Breast epithelium (tissue), 4 donors: ENCODE measurements at regions of chr17 and their contacts with region 1.

Region 1: DNA sequence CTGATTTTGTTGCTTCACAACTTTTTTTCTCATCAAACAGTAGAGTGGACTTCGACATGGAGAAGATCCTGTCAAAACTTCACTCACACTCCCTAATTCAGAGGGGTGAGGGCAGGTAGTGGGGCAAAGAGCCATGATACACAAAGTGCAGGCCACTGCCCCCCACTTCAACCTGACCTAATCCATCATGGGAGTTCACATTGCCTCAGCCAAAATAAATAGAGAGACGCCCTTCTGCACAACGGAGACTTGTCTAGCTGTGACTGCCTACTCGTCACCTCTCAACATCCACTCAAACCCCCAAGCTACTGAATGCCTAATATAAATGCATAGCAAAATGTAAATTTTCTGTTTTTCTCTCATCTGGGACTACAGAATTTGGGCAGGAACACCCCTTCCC is 213.2 kb downstream of the PMP22 start:
- DNase-seq: no peak
- H3K4me3 ChIP-seq: no peak overlapping the region
- H3K27ac ChIP-seq: no peak overlapping the region
- H3K4me1 ChIP-seq: no peaks in the 10 kb centered on the region
- H3K27me3 ChIP-seq: peaks cover 0 to 5% of the 10 kb centered on the region in 2 donors
- CTCF ChIP-seq: no peak
- POLR2A ChIP-seq: no peak

Region 2: DNA sequence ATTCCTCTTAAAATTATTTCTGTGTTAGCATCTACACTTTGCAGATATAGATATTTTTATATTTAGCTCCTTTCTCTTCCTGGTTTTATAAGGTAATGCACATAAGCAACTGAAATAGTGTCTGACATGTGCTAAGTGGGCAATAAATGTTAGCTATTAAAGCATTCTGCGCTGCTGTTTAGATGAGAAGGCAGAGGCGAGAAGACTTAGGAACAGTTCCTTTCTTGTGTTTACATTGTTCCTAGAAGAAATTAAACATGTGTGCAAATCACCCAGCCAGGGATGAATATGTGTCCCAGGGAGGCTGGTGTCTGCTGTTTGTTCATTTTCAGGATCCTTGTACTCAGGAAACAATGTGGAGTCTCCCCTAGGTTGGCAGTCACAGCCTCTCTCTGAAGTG is 79.1 kb before region 1 on chr17:
- intact Hi-C with region 1: no loop called
- DNase-seq: no peak
- H3K4me3 ChIP-seq: no peak overlapping the region
- H3K27ac ChIP-seq: no peak overlapping the region
- H3K4me1 ChIP-seq: no peaks in the 10 kb centered on the region
- H3K27me3 ChIP-seq: peaks cover 0 to 13% of the 10 kb centered on the region in 2 donors
- CTCF ChIP-seq: no peak
- POLR2A ChIP-seq: no peak

Region 3: GRCh38 chr17:15112846-15113617 is 61.1 kb after region 1 on chr17:
- intact Hi-C with region 1: no loop called
- DNase-seq: no peak
- H3K4me3 ChIP-seq: no peak overlapping the region
- H3K27ac ChIP-seq: no peak overlapping the region
- H3K4me1 ChIP-seq: no peaks in the 10 kb centered on the region
- H3K27me3 ChIP-seq: no peaks in the 10 kb centered on the region
- CTCF ChIP-seq: no peak
- POLR2A ChIP-seq: no peak

Region 4: GRCh38 chr17:15130426-15130825 is 78.5 kb after region 1 on chr17:
- intact Hi-C with region 1: loop called (anchors 2 kb)
- DNase-seq: no peak
- H3K4me3 ChIP-seq: no peak overlapping the region
- H3K27ac ChIP-seq: no peak overlapping the region
- H3K4me1 ChIP-seq: no peaks in the 10 kb centered on the region
- H3K27me3 ChIP-seq: no peaks in the 10 kb centered on the region
- CTCF ChIP-seq: no peak
- POLR2A ChIP-seq: no peak